Endothelial cell of umbilical vein (primary cell): ENCODE measurements at regions of chr7 and their contacts with region 1.

Region 1: GRCh38 chr7:47435889-47436312 is 146.0 kb downstream of the TNS3 start:
- DNase-seq: peak; percentile 68
- H3K4me3 ChIP-seq: no peak overlapping the region
- H3K27ac ChIP-seq: no peak overlapping the region
- H3K4me1 ChIP-seq: no peaks in the 10 kb centered on the region
- H3K27me3 ChIP-seq: no peaks in the 10 kb centered on the region
- CTCF ChIP-seq: peak; percentile 78 to 82
- POLR2A ChIP-seq: no peak

Region 2: GRCh38 chr7:47422611-47423010 is 13.3 kb before region 1 on chr7:
- CTCF ChIA-PET with region 1: interaction called, 10 read pairs
- POLR2A ChIA-PET with region 1: no interaction called
- dilution Hi-C with region 1: no loop called
- intact Hi-C with region 1: no loop called
- DNase-seq: no peak
- H3K4me3 ChIP-seq: no peak overlapping the region
- H3K27ac ChIP-seq: no peak overlapping the region
- H3K4me1 ChIP-seq: peaks cover 6% of the 10 kb centered on the region
- H3K27me3 ChIP-seq: no peaks in the 10 kb centered on the region
- CTCF ChIP-seq: no peak
- POLR2A ChIP-seq: no peak

Region 3: DNA sequence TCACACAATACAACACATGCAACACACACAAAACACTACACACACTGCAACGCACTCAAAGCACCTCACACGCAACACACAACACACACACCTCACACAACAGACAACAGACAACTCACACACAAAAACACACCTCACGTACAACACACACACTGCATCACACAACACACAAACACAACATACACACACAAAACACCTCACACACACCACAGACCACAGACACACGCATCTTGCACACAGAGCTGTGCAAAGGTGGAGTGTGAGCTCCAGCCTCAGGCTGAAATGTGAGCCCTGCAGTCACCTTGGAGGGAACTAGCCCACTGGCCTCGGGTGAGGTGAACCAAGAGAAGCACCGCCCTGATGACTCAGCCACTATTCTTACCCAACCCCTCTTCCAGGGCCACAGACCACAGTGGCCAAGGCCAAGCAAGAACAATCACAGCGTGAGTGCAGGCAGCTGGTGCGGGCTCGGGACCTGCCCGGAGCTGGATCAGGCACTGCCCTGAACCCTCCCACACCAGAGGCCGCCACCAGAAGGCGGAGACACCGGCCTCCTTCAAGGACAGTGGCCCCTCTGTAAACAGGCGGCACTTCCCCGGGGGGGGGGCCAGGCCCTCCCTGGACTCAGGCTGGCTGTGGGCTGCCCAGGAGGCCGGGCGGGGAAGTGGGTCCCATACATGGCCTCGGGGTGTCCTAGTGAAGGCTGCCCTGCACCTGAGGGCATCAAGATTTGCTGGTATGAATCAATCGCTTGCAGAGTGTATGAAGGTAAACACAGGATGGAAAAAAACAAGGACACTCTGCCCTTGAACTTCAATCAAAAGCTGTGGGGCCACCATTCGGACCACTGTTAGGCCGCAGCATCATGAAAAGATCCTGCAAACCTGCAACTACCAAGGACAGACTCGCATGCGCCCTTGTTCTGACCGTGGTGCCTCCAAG is 39.3 kb after region 1 on chr7:
- CTCF ChIA-PET with region 1: interaction called, 10 read pairs
- POLR2A ChIA-PET with region 1: no interaction called
- dilution Hi-C with region 1: no loop called
- intact Hi-C with region 1: no loop called
- DNase-seq: peak; percentile 54
- H3K4me3 ChIP-seq: no peak overlapping the region
- H3K27ac ChIP-seq: no peak overlapping the region
- H3K4me1 ChIP-seq: peaks cover 12% of the 10 kb centered on the region
- H3K27me3 ChIP-seq: no peaks in the 10 kb centered on the region
- CTCF ChIP-seq: no peak
- POLR2A ChIP-seq: no peak

Region 4: GRCh38 chr7:47581806-47582763 is 146.2 kb after region 1 on chr7 and contains the start of gene TNS3:
- CTCF ChIA-PET with region 1: interaction called, 11 read pairs
- POLR2A ChIA-PET with region 1: no interaction called
- dilution Hi-C with region 1: no loop called
- intact Hi-C with region 1: loop called (anchors 2 kb)
- DNase-seq: no peak
- H3K4me3 ChIP-seq: peak within 1 kb of the TSS; percentile 56 to 74 (median 69)
- H3K27ac ChIP-seq: no peak within 1 kb of the TSS
- H3K4me1 ChIP-seq: peaks cover 18% of the 10 kb centered on the region
- H3K27me3 ChIP-seq: peaks cover 6 to 8% of the 10 kb centered on the region in 2 experiments
- CTCF ChIP-seq: peak; percentile 7 to 17
- POLR2A ChIP-seq: no peak
- total RNA-seq, gene TNS3: 45.1 and 59.8 TPM in 2 replicates

Region 5: DNA sequence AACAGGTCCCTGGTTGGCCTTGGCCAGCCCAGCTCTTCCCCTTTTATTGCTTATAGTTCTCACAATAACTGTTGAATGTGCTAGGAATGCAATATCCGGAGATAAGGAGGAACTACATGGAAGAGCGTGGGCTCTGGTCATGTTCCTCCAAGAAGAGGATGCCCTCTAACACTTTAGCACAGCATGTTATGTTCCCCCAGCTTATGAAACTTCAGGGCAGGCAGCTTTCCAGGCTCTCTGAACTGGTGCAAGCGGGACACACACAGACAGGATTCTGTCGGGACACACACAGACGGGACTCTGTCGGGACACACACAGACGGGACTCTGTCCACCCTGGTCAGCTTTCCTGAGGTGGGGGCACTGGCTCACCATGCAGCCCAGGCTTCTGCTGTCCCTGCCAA is 370.8 kb after region 1 on chr7:
- CTCF ChIA-PET with region 1: interaction called, 15 read pairs
- POLR2A ChIA-PET with region 1: no interaction called
- dilution Hi-C with region 1: no loop called
- intact Hi-C with region 1: no loop called
- DNase-seq: peak; percentile 59
- H3K4me3 ChIP-seq: no peak overlapping the region
- H3K27ac ChIP-seq: peak overlapping the region; percentile 36
- H3K4me1 ChIP-seq: peaks cover 31% of the 10 kb centered on the region
- H3K27me3 ChIP-seq: no peaks in the 10 kb centered on the region
- CTCF ChIP-seq: no peak
- POLR2A ChIP-seq: no peak